Dorsolateral prefrontal cortex (tissue), 120 donors: ENCODE measurements at regions of chr5 and their contacts with region 1.

Region 1: GRCh38 chr5:90434116-90434714 is 24.7 kb upstream of the CETN3 start:
- DNase-seq: peak; percentile 28 to 77 (median 63)
- H3K4me3 ChIP-seq: no peak overlapping the region
- H3K27ac ChIP-seq: no peak overlapping the region
- H3K27me3 ChIP-seq: no peaks in the 10 kb centered on the region
- CTCF ChIP-seq: peak; percentile 45 to 85 (median 72)

Region 2: DNA sequence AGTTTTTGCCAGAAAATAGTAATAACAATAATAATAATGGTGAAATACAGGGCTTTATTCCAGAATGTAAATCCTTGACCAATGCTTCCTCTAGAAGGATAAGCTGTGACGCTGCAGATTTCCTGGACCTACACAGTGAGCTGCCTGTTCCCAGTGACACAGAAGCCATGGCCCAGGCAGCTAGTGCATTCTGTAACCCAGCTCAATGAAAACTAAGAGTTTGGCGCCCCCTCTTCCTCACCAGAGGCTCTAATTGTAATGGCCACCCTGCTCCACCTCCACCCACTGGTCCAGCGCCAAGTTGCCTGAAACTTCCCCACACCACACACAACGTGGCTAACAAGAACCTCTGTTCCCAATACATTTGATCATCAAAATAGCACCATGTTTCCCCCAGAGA is 272.8 kb before region 1 on chr5:
- intact Hi-C with region 1: no loop called
- DNase-seq: peak in 2 of 10 donors; percentile 7 to 32
- H3K4me3 ChIP-seq: no peak overlapping the region
- H3K27ac ChIP-seq: peak overlapping the region in 37 of 59 donors; percentile 1 to 73 (median 49)
- H3K27me3 ChIP-seq: no peaks in the 10 kb centered on the region
- CTCF ChIP-seq: peak in 5 of 56 donors; percentile 3 to 19 (median 12)

Region 3: DNA sequence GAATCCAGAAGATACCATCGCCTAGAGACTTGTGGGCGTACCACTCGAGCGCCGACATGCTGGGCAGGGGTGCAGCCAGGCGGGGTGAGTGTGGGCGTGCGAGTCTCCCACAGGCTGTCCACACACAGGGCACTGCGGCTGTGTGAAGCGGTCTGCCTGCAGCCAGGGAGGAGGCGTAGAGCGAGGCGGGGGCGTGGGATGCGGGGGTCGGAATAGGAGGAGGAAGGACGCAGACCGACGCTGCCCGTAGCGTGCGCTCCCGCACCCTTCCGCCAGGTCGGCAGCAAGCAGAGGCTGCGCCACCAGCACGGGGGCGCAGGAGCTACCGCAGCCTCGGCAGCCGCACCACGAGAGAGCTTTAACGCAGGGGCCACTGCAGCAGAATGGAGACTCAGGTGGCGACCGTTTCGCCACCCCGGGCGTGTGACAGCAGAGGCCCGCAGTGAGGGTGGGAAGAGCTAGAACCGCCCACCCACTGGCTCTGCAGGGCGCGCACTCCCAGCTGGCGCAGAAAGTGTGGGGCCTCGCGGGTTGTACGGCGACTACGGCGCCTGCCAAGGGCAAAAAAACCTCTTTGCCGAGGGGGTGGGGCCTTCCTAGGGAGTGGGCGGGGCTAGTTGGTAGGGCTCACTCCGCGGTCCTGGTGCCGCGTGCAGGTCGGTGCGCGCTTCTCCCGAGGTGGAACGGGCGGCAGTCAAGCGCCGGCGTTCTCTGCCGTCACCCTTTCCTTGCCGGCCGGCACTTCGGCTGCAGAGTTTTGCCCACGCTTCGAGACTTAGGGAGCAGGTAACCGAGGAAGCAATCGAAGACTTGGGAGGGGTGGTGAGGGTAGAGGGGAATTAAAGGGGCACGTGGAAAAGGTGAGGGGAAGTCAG is 40.3 kb after region 1 on chr5 and contains the starts of genes MBLAC2 and POLR3G:
- intact Hi-C with region 1: loop called in 1 of 2 experiments (anchors 5 kb)
- DNase-seq: peak; percentile 80 to 94 (median 90)
- H3K4me3 ChIP-seq: peak within 1 kb of the TSS; percentile 52 to 98 (median 89)
- H3K27ac ChIP-seq: peak within 1 kb of the TSS; percentile 32 to 96 (median 90)
- H3K27me3 ChIP-seq: no peaks in the 10 kb centered on the region
- CTCF ChIP-seq: peak in 54 of 56 donors; percentile 10 to 72 (median 52)
- total RNA-seq, gene MBLAC2: 9.0 to 18.7 (median 13.8) TPM
- total RNA-seq, gene POLR3G: 3.8 to 12.6 (median 7.0) TPM

Region 4: GRCh38 chr5:90488791-90489190 is 54.6 kb after region 1 on chr5:
- intact Hi-C with region 1: no loop called
- DNase-seq: no peak
- H3K4me3 ChIP-seq: no peak overlapping the region
- H3K27ac ChIP-seq: no peak overlapping the region
- H3K27me3 ChIP-seq: no peaks in the 10 kb centered on the region
- CTCF ChIP-seq: no peak

Region 5: DNA sequence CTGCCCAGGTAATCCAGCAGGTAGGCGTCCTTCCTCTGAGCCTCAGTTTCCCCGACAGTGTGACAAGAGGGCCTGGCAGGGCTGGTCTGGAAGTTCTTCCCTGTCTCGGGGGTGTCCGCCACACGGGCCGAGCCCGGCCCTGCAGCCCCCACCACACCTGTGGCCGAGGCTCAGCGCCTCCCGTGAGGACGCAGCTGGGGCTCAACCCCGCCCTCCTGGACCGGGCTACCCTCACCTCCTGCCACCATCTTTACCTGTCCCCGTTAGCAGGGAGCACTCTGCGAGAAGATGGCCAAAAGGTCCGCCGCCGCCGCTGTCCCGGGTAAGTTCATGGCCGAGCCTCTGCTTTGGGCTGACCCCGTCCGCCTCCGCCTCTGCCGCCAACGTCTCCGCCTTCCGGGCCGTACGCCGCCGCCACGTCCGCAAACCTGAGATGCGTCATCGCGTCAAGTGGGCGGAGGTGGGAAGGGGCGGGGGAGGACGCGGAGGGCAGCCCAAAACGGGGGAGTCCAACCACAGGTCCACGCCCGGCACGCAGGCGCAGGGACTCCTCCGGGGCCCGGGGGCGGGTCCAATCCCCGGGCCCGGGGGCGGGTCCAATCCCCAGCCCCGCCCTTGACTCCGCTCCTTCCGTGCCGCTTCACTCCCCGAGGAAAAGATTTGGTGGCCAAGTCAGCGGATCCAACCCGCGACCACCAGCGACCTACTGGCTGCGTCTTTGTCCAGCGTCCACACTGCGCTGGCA is 95.2 kb after region 1 on chr5 and contains the start of gene LYSMD3:
- intact Hi-C with region 1: loop called (anchors 2 to 5 kb)
- DNase-seq: peak; percentile 90 to 99 (median 94)
- H3K4me3 ChIP-seq: peak within 1 kb of the TSS; percentile 63 to 99 (median 90)
- H3K27ac ChIP-seq: peak within 1 kb of the TSS; percentile 74 to 100 (median 97)
- H3K27me3 ChIP-seq: no peaks in the 10 kb centered on the region
- CTCF ChIP-seq: peak in 1 of 56 donors; percentile 7
- total RNA-seq, gene LYSMD3: 8.2 to 18.0 (median 13.0) TPM

Region 6: DNA sequence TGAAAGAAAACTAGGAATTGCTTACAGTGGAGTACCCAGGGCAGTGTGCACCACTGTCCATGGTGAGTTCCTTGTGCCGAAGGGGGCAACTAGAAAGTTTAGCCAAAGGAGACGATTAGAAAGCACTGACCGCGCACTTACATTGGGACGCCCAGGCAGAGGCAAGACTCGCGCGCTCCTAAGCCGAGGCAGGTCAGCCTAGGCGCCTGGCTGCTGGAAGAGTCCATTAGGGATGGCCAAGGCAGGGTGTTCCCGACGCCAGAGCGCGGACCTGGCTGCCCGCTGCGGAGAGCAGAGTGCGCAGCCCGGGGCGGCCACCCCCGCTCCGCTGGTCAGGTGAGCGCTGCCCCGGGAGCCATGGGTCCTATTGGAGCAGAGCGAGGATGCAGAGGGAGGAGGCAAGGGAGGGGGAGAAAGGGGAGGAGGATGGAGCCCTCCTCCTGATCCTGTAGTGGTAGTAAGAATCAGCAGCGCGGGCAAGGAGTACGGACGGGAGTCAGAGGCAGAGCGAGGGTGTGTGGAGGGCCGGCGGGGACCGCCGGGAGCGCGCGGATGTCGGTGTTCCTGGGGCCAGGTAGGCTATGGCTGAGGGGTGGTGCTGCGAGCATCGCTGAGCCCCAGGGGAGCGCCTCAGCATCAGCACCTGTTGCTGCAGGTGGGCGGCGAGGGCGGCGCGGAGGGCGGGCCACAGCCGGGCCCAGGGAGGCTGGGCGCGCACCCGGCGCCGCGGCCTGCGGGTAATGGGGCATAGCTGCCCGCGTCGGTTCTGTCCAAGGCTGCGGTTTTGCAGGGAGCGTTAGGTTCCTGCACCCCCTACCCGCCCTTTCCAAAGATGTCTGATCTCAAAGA is 124.4 kb after region 1 on chr5 and contains the start of gene ADGRV1:
- intact Hi-C with region 1: no loop called
- DNase-seq: peak; percentile 29 to 91 (median 74)
- H3K4me3 ChIP-seq: peak within 1 kb of the TSS; percentile 45 to 82 (median 68)
- H3K27ac ChIP-seq: peak within 1 kb of the TSS in 21 of 59 donors; percentile 0 to 80 (median 38)
- H3K27me3 ChIP-seq: peaks cover 0 to 16% (median 0%) of the 10 kb centered on the region in 45 donors
- CTCF ChIP-seq: peak in 1 of 56 donors; percentile 9
- total RNA-seq, gene ADGRV1: 60.4 to 376 (median 133) TPM

Region 7: DNA sequence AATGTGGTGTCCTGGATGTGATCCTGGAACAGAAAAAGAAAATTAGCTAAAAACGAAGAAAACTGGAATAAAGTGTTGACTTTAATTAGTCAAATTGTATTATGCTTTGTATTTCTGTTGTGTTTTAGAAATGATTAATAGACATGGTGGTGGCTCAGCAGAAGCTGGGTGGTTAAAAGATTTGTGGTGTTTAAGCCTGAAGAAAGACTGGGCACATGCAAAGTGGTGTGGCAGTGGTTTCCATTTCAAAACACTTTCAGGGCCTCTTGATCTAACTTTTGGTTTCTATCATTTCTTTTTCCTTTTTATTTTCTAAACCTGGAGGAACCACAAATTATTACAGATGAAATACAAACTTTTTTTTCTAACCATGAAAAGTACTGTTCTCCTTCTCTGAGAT is 168.5 kb after region 1 on chr5:
- intact Hi-C with region 1: loop called in 1 of 2 experiments (anchors 5 kb)
- DNase-seq: no peak
- H3K4me3 ChIP-seq: no peak overlapping the region
- H3K27ac ChIP-seq: no peak overlapping the region
- H3K27me3 ChIP-seq: no peaks in the 10 kb centered on the region
- CTCF ChIP-seq: no peak

Region 8: DNA sequence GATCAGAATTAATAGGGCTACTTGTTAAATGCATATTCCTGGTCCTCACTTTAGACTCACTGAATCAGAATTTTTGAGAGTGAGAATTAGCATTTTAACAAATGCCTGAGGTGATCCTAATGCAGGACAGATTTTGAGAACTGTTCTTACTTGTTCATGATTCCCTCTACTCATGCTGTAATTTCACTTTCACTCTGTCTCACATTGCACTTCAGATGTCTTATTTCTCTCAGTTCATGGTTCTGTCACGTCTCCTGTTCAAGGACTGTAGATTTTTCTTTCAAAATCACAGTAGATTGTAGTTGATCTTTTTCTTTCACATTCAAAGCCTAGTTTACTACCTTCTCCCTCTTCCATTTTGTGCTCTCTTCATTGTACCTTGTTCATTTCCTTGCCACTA is 178.7 kb after region 1 on chr5:
- intact Hi-C with region 1: loop called in 1 of 2 experiments (anchors 10 kb)
- DNase-seq: no peak
- H3K4me3 ChIP-seq: peak overlapping the region in 13 of 59 donors; percentile 3 to 31 (median 17)
- H3K27ac ChIP-seq: peak overlapping the region in 29 of 59 donors; percentile 0 to 69 (median 32)
- H3K27me3 ChIP-seq: no peaks in the 10 kb centered on the region
- CTCF ChIP-seq: no peak

Region 9: GRCh38 chr5:90783460-90784333 is 349.5 kb after region 1 on chr5:
- intact Hi-C with region 1: loop called (anchors 2 to 10 kb)
- DNase-seq: peak in 9 of 10 donors; percentile 37 to 82 (median 68)
- H3K4me3 ChIP-seq: no peak overlapping the region
- H3K27ac ChIP-seq: no peak overlapping the region
- H3K27me3 ChIP-seq: no peaks in the 10 kb centered on the region
- CTCF ChIP-seq: peak; percentile 76 to 96 (median 88)